ENCODE measurements at regions of chr6 and their contacts with region 1.

Region 1: GRCh38 chr6:2634139-2634964 is 116.4 kb downstream of the MYLK4 start:
- DNase-seq: peak; percentile 86
- H3K4me3 ChIP-seq: peak overlapping the region; percentile 22 to 53 (median 40)
- H3K27ac ChIP-seq: peak overlapping the region; percentile 55
- H3K4me1 ChIP-seq: peaks cover 30% of the 10 kb centered on the region
- H3K27me3 ChIP-seq: no peaks in the 10 kb centered on the region
- CTCF ChIP-seq: peak; percentile 80 to 99

Region 2: GRCh38 chr6:1596088-1596852 is 1038.1 kb before region 1 on chr6:
- CTCF ChIA-PET with region 1: interaction called, 3 read pairs
- dilution Hi-C with region 1: no loop called
- in situ Hi-C with region 1: loop called in 1 of 2 experiments (anchors 25 kb)
- intact Hi-C with region 1: loop called (anchors 1 kb)
- DNase-seq: peak; percentile 43
- H3K4me3 ChIP-seq: no peak overlapping the region
- H3K27ac ChIP-seq: no peak overlapping the region
- H3K4me1 ChIP-seq: peaks cover 18% of the 10 kb centered on the region
- H3K27me3 ChIP-seq: no peaks in the 10 kb centered on the region
- CTCF ChIP-seq: peak; percentile 65 to 96

Region 3: GRCh38 chr6:1856381-1856780 is 778.0 kb before region 1 on chr6:
- CTCF ChIA-PET with region 1: no interaction called
- dilution Hi-C with region 1: no loop called
- in situ Hi-C with region 1: no loop called
- intact Hi-C with region 1: loop called (anchors 10 kb)
- DNase-seq: peak; percentile 61
- H3K4me3 ChIP-seq: no peak overlapping the region
- H3K27ac ChIP-seq: no peak overlapping the region
- H3K4me1 ChIP-seq: peaks cover 6% of the 10 kb centered on the region
- H3K27me3 ChIP-seq: no peaks in the 10 kb centered on the region
- CTCF ChIP-seq: peak in 1 of 2 donors; percentile 3

Region 4: DNA sequence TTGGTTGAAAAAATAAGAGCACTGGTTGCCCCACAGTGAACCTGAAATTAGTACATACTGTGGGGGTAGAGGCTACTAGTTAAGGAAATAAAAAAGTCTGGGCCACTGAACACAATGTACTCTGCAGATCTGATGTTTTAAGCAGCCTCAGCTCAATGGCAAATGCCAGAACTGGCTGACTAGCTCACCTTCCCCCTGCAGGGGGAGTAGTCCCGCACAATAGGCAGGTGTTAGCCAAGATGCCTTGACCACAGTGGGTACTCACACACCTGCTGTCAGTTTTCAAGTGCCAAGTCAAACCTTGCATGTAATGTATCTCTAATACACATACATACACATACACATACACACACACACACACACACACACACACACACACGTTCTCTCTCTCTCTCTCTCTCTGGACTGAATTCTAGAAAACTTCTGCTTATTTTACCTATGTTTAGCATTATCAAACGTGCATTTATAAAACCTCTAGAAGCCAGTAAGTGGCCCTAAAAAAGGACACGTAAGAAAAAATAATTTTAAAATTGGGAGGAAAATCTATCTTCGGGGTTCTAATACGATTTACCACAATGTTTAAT is 425.0 kb before region 1 on chr6:
- CTCF ChIA-PET with region 1: no interaction called
- dilution Hi-C with region 1: no loop called
- in situ Hi-C with region 1: no loop called
- intact Hi-C with region 1: loop called (anchors 1 kb)
- DNase-seq: peak; percentile 50
- H3K4me3 ChIP-seq: no peak overlapping the region
- H3K27ac ChIP-seq: no peak overlapping the region
- H3K4me1 ChIP-seq: no peaks in the 10 kb centered on the region
- H3K27me3 ChIP-seq: no peaks in the 10 kb centered on the region
- CTCF ChIP-seq: peak; percentile 83 to 95

Region 5: DNA sequence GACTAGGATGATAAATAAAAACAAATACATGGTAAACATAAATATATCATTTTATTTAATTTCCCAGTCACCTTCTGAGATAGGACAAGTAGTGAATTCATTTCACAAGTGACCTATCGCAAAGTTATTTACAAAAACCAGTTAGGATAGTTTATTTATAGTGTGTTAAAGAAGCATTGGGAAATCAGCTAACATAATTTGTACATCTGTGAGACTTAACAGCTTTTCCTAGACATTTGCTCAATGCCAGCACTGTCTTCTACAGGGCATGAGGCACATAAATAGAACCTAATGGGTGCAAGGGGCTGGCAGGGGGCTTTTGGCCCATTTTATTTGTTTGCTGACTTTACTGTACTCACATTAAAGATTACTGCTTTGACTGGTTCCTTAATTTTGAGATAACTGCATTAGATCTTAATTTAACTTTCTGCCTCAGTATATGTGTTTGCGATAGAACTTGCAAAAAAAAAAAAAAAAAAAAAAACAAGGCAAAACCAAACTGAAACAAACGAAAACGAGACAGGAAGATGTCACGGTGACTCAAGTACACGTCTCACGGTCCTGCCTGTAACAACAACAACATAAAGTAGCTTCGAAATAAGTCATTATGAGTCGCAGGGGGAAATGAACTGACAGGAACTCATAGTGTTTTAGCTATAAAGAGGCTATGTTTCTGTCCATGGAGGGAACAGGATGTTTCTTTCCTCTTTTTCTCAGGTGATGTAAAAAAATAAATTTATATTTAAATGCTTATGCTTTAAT is 255.3 kb before region 1 on chr6:
- CTCF ChIA-PET with region 1: no interaction called
- dilution Hi-C with region 1: no loop called
- in situ Hi-C with region 1: loop called in 1 of 2 experiments (anchors 25 kb)
- intact Hi-C with region 1: loop called (anchors 5 kb)
- DNase-seq: peak; percentile 85
- H3K4me3 ChIP-seq: no peak overlapping the region
- H3K27ac ChIP-seq: peak overlapping the region; percentile 20
- H3K4me1 ChIP-seq: peaks cover 25% of the 10 kb centered on the region
- H3K27me3 ChIP-seq: no peaks in the 10 kb centered on the region
- CTCF ChIP-seq: no peak

Region 6: DNA sequence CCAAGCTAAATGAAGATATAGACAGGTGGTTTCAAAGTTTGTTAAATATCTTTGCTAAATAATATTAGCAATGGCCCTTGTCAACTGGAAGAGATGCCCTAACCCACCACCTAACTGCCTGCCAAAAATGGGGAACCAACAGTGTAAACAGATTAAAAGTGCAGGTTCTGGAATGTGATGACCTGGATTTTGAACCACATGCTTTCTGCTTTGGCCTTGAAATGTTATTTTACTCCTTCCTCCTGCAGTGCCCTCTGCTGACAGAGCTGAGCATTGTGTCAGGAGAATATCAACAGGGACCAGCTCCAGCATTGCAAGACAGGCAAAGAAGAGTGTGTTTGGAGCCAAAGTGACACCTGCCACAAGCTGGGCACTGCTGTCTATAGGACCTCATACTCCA is 110.3 kb before region 1 on chr6:
- CTCF ChIA-PET with region 1: no interaction called
- dilution Hi-C with region 1: no loop called
- in situ Hi-C with region 1: no loop called
- intact Hi-C with region 1: loop called (anchors 1 kb)
- DNase-seq: no peak
- H3K4me3 ChIP-seq: no peak overlapping the region
- H3K27ac ChIP-seq: peak overlapping the region; percentile 99
- H3K4me1 ChIP-seq: peaks cover 21% of the 10 kb centered on the region
- H3K27me3 ChIP-seq: no peaks in the 10 kb centered on the region
- CTCF ChIP-seq: peak; percentile 30 to 51

Measured in mammary epithelial cell (primary cell).